ENCODE measurements at regions of chr20 and their contacts with region 1.

Region 1: GRCh38 chr20:47677635-47678453 is 107.4 kb downstream of the SULF2 start:
- DNase-seq: peak; percentile 79
- ATAC-seq: peak; percentile 72
- H3K4me3 ChIP-seq: no peak overlapping the region
- H3K4me3 Mint-ChIP-seq: no peak overlapping the region
- H3K27ac ChIP-seq: no peak overlapping the region
- H3K27ac Mint-ChIP-seq: no peak overlapping the region
- H3K4me1 ChIP-seq: no peaks in the 10 kb centered on the region
- H3K4me1 Mint-ChIP-seq: peaks cover 1% of the 10 kb centered on the region
- H3K27me3 ChIP-seq: peaks cover 0 to 2% (median 0%) of the 10 kb centered on the region in 4 experiments
- H3K27me3 Mint-ChIP-seq: peaks cover 5% of the 10 kb centered on the region
- CTCF ChIP-seq: peak; percentile 88

Region 2: GRCh38 chr20:47642624-47643023 is 35.2 kb before region 1 on chr20:
- CTCF ChIA-PET with region 1: no interaction called
- POLR2A ChIA-PET with region 1: no interaction called
- intact Hi-C with region 1: no loop called
- DNase-seq: no peak
- ATAC-seq: no peak
- H3K4me3 ChIP-seq: no peak overlapping the region
- H3K4me3 Mint-ChIP-seq: no peak overlapping the region
- H3K27ac ChIP-seq: no peak overlapping the region
- H3K27ac Mint-ChIP-seq: no peak overlapping the region
- H3K4me1 ChIP-seq: no peaks in the 10 kb centered on the region
- H3K4me1 Mint-ChIP-seq: peaks cover 3% of the 10 kb centered on the region
- H3K27me3 ChIP-seq: no peaks in the 10 kb centered on the region
- H3K27me3 Mint-ChIP-seq: no peaks in the 10 kb centered on the region
- CTCF ChIP-seq: no peak

Region 3: GRCh38 chr20:47663333-47664067 is 14.3 kb before region 1 on chr20:
- CTCF ChIA-PET with region 1: interaction called, 13 read pairs
- POLR2A ChIA-PET with region 1: no interaction called
- intact Hi-C with region 1: no loop called
- DNase-seq: peak; percentile 82
- ATAC-seq: peak; percentile 84
- H3K4me3 ChIP-seq: no peak overlapping the region
- H3K4me3 Mint-ChIP-seq: no peak overlapping the region
- H3K27ac ChIP-seq: no peak overlapping the region
- H3K27ac Mint-ChIP-seq: peak overlapping the region; percentile 78
- H3K4me1 ChIP-seq: peaks cover 0 to 7% of the 10 kb centered on the region in 2 donors
- H3K4me1 Mint-ChIP-seq: peaks cover 7% of the 10 kb centered on the region
- H3K27me3 ChIP-seq: no peaks in the 10 kb centered on the region
- H3K27me3 Mint-ChIP-seq: no peaks in the 10 kb centered on the region
- CTCF ChIP-seq: peak; percentile 96

Region 4: GRCh38 chr20:47785854-47786764 is 108.3 kb after region 1 on chr20:
- CTCF ChIA-PET with region 1: interaction called, 5 read pairs
- POLR2A ChIA-PET with region 1: no interaction called
- intact Hi-C with region 1: loop called (anchors 2 kb)
- DNase-seq: peak; percentile 71
- ATAC-seq: peak; percentile 67
- H3K4me3 ChIP-seq: peak overlapping the region; percentile 24 to 79 (median 54)
- H3K4me3 Mint-ChIP-seq: peak overlapping the region; percentile 89
- H3K27ac ChIP-seq: no peak overlapping the region
- H3K27ac Mint-ChIP-seq: no peak overlapping the region
- H3K4me1 ChIP-seq: peaks cover 19 to 25% of the 10 kb centered on the region in 2 donors
- H3K4me1 Mint-ChIP-seq: peaks cover 23% of the 10 kb centered on the region
- H3K27me3 ChIP-seq: peaks cover 0 to 46% (median 25%) of the 10 kb centered on the region in 4 experiments
- H3K27me3 Mint-ChIP-seq: peaks cover 58% of the 10 kb centered on the region
- CTCF ChIP-seq: peak; percentile 64